CD8-positive, alpha-beta T cell (primary cell): ENCODE measurements at regions of chr5 and their contacts with region 1.

Region 1: DNA sequence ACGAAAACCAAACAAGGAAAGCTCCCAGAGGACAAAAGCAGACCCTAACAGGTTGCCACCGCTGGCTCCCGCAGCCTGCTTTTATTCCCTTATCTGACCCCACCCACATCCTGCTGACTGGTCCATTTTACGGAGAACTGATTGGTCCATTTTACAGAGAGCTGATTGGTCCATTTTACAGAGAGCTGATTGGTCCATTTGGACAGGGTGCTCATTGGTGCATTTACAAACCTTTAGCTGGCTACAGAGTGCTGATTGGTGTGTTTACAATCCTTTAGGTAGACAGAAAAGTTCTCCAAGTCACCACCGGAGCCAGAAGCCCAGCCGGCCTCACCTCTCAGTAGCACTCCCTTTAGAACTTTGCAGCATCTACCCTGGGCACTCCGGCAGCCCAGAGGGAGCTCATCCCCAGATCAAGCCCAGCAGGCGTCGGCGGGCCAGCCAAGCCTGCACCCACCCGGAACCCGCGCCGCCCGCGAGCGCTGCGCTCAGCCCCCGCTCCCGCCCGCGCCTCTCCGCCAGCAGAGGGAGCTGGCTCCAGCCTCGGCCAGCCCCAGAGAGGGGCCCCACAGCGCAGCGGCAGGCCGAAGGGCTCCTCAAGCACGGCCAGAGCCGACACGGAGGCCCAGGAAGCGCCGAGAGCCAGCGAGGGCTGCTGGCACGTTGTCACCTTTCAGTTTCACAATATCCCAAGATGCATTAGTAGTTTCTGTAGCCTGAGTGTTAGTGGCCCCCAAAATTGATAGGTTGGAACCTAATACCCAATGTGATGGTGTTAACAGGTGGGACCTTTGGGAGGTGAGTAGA is 35.3 kb upstream of the CLPTM1L start:
- DNase-seq: peak; percentile 21 to 80 (median 57)
- ATAC-seq: peak; percentile 92
- H3K4me3 ChIP-seq: peak overlapping the region; percentile 14 to 37
- H3K4me3 Mint-ChIP-seq: peak overlapping the region; percentile 81
- H3K27ac ChIP-seq: no peak overlapping the region
- H3K27ac Mint-ChIP-seq: no peak overlapping the region
- H3K4me1 ChIP-seq: peaks cover 12% of the 10 kb centered on the region
- H3K4me1 Mint-ChIP-seq: peaks cover 8% of the 10 kb centered on the region
- H3K27me3 ChIP-seq: no peaks in the 10 kb centered on the region
- H3K27me3 Mint-ChIP-seq: no peaks in the 10 kb centered on the region
- CTCF ChIP-seq: peak; percentile 85

Region 2: DNA sequence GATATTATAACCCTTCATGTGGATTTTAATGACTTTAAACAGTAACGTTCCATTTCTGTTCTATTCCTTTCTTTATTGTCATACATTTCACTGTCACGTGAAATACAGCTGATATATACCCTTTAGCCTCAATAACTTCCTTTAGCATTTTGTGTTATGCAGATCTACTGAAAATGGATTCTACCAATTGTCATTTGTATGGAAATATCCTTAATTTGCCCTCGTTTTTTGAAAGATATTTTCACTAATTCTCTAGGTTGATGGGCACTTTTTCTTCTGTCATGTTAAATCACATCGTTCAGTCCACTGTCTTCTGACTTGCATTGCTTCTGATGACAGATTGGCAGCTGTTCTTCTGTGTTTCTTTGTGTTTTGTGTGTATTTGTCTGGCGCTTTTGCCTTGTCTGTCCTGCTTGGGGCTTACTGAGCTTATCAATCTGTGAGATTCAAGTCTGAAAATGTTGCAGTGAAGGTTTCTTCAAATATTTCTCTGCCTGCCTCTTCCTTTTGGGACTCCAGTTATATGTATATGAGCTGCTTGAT is 25.7 kb before region 1 on chr5:
- CTCF ChIA-PET with region 1: interaction called, 10 read pairs
- POLR2A ChIA-PET with region 1: no interaction called
- intact Hi-C with region 1: no loop called
- DNase-seq: no peak
- ATAC-seq: no peak
- H3K4me3 ChIP-seq: no peak overlapping the region
- H3K4me3 Mint-ChIP-seq: no peak overlapping the region
- H3K27ac ChIP-seq: no peak overlapping the region
- H3K27ac Mint-ChIP-seq: no peak overlapping the region
- H3K4me1 ChIP-seq: no peaks in the 10 kb centered on the region
- H3K4me1 Mint-ChIP-seq: no peaks in the 10 kb centered on the region
- H3K27me3 ChIP-seq: peaks cover 0 to 6% of the 10 kb centered on the region in 2 experiments
- H3K27me3 Mint-ChIP-seq: peaks cover under 1% of the 10 kb centered on the region
- CTCF ChIP-seq: no peak

Region 3: DNA sequence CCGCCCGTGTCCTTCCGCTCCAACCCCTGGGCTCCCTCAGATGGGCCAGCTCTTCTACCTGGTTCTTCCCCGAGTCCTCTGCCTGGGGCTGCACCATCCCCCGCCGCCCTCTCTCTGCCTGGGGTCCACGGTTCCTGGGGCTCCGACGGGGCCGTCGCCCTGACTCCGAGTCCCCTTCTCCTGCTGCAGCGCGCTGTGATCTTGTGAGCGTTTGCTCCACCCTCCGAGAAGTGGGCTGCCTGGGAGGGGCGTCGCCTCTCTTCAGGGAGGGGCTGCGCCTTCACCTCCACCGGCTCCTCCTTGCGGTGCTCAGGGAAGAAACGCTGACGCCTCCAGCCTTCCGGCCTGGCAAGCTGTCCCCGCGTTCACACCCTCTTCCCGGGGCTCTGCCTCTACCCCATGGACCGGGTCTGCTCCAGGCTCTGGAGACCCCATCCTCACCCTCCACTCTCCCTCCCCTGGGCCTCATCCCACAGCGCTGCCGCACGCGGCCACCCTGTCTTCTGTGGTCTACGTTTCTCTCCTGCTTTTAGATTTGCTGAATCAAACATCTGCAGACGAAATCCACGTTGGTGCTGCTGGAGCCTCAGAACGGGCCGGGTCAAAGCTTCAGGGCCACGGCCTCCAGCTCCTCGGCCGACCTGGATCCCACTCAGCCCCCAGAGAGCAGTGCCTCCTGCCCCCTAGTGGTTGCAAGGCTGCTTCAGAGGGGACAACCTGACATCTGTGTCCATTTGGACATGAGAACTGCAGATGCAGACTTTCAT is 87.7 kb after region 1 on chr5:
- CTCF ChIA-PET with region 1: no interaction called
- POLR2A ChIA-PET with region 1: no interaction called
- intact Hi-C with region 1: loop called in 1 of 2 experiments (anchors 1 kb)
- DNase-seq: peak in 4 of 9 experiments; percentile 31 to 56 (median 50)
- ATAC-seq: no peak
- H3K4me3 ChIP-seq: no peak overlapping the region
- H3K4me3 Mint-ChIP-seq: no peak overlapping the region
- H3K27ac ChIP-seq: no peak overlapping the region
- H3K27ac Mint-ChIP-seq: no peak overlapping the region
- H3K4me1 ChIP-seq: no peaks in the 10 kb centered on the region
- H3K4me1 Mint-ChIP-seq: no peaks in the 10 kb centered on the region
- H3K27me3 ChIP-seq: no peaks in the 10 kb centered on the region
- H3K27me3 Mint-ChIP-seq: no peaks in the 10 kb centered on the region
- CTCF ChIP-seq: peak; percentile 19